OCI-LY7 (cell line): ENCODE measurements at regions of chr10 and their contacts with region 1.

Region 1: GRCh38 chr10:62050893-62051433 is 149.5 kb downstream of the ARID5B start:
- DNase-seq: no peak
- H3K4me3 ChIP-seq: peak overlapping the region; percentile 61
- H3K27ac ChIP-seq: no peak overlapping the region
- H3K4me1 ChIP-seq: peaks cover 70% of the 10 kb centered on the region
- CTCF ChIP-seq: no peak

Region 2: GRCh38 chr10:61896854-61897661 is 153.9 kb before region 1 on chr10:
- CTCF ChIA-PET with region 1: interaction called, 4 read pairs
- POLR2A ChIA-PET with region 1: interaction called, 277 read pairs
- intact Hi-C with region 1: loop called (anchors 2 kb)
- DNase-seq: peak; percentile 95
- H3K4me3 ChIP-seq: peak overlapping the region; percentile 93
- H3K27ac ChIP-seq: peak overlapping the region; percentile 96
- H3K4me1 ChIP-seq: peaks cover 36% of the 10 kb centered on the region
- CTCF ChIP-seq: peak; percentile 83

Region 3: GRCh38 chr10:61992671-61993668 is 58.0 kb before region 1 on chr10:
- CTCF ChIA-PET with region 1: no interaction called
- POLR2A ChIA-PET with region 1: interaction called, 40 read pairs
- intact Hi-C with region 1: loop called (anchors 1 kb)
- DNase-seq: peak; percentile 67
- H3K4me3 ChIP-seq: peak overlapping the region; percentile 58
- H3K27ac ChIP-seq: peak overlapping the region; percentile 80
- H3K4me1 ChIP-seq: peaks cover 100% of the 10 kb centered on the region
- CTCF ChIP-seq: no peak

Region 4: GRCh38 chr10:62063795-62064472 is 13.0 kb after region 1 on chr10:
- CTCF ChIA-PET with region 1: interaction called, 3 read pairs
- POLR2A ChIA-PET with region 1: interaction called, 19 read pairs
- intact Hi-C with region 1: no loop called
- DNase-seq: no peak
- H3K4me3 ChIP-seq: no peak overlapping the region
- H3K27ac ChIP-seq: no peak overlapping the region
- H3K4me1 ChIP-seq: no peaks in the 10 kb centered on the region
- CTCF ChIP-seq: no peak

Region 5: DNA sequence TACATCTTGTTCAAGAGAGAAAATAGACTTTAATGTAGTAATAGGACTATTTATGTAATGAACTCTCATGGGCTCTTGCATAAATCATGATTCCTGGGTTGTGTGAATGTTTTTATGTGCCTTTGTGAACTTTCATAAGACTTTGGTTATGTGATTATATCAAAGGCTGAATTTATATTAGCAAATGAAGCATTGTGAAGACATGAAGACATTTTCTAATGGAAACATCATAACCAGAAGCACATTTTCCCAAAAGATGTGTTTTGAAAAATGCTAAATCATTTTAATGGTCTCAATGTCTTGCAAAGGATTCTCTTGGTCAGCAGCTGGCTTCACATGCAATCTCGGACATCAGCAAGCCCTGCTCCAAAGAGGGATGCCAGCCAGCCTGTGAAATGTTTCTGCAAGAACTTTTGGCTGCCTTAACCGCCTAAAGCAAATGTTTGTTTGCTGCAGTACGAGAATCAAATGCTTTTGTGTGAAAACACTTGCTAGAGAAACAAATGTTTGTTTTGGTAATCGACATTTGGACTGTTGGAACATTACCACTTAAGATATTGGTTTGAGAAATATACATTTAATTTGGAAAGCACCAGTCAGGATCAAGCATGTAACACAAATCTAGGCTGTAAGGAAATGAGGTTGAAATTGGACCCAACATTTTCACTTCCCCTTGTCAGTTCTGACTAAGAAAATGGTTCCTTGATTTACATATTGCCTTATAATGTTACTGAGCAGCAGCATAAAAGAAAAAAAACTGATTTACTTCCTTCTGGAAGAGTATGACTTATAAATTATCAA is 115.6 kb after region 1 on chr10:
- CTCF ChIA-PET with region 1: no interaction called
- POLR2A ChIA-PET with region 1: interaction called, 3 read pairs
- intact Hi-C with region 1: loop called (anchors 2 kb)
- DNase-seq: peak; percentile 76
- H3K4me3 ChIP-seq: peak overlapping the region; percentile 32
- H3K27ac ChIP-seq: peak overlapping the region; percentile 57
- H3K4me1 ChIP-seq: peaks cover 26% of the 10 kb centered on the region
- CTCF ChIP-seq: no peak

Region 6: DNA sequence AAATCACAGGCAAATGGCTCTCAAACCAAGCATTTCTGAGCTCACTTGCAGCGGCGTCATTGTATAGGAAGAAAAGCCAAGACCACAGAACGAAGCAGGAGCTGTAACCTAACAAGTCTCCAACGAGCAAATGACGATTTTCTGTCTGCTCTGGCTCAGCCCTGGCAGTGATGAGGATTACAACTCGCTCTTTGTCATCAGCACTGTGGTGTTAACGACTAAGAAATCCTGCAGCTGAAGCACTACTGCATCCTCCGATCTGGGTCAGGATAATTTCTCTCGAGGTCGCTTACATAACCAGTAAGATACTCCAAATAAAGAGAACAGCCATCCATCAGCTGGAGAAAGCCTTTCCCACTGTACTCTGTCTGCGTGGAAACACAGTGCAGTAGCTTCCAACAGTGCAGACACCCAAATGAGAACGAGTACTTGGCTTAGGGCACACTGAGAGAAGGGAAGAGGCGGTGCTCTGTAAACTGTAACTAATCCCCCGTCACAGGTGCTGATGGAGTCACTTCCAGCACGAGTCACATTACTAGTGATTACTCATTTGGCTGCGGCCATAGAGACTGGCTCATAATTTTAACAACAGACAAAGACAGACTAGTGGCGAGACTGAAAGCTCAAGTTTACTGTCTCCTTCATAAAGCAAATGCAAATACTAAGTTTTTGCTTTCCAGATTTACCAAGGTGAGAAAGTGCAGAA is 1218.0 kb after region 1 on chr10:
- CTCF ChIA-PET with region 1: no interaction called
- POLR2A ChIA-PET with region 1: no interaction called
- intact Hi-C with region 1: loop called (anchors 5 kb)
- DNase-seq: peak; percentile 95
- H3K4me3 ChIP-seq: peak overlapping the region; percentile 82
- H3K27ac ChIP-seq: peak overlapping the region; percentile 94
- H3K4me1 ChIP-seq: peaks cover 35% of the 10 kb centered on the region
- CTCF ChIP-seq: peak; percentile 55